ENCODE measurements at regions of chr14 and their contacts with region 1.

Region 1: GRCh38 chr14:106831322-106831720 is 1304.9 kb downstream of the TMEM121 start:
- DNase-seq: peak; percentile 76 to 83 (median 82)
- H3K4me3 ChIP-seq: no peak overlapping the region
- H3K27ac ChIP-seq: no peak overlapping the region
- H3K4me1 ChIP-seq: peaks cover 0 to 3% (median under 1%) of the 10 kb centered on the region in 4 experiments
- H3K27me3 ChIP-seq: no peaks in the 10 kb centered on the region

Region 2: DNA sequence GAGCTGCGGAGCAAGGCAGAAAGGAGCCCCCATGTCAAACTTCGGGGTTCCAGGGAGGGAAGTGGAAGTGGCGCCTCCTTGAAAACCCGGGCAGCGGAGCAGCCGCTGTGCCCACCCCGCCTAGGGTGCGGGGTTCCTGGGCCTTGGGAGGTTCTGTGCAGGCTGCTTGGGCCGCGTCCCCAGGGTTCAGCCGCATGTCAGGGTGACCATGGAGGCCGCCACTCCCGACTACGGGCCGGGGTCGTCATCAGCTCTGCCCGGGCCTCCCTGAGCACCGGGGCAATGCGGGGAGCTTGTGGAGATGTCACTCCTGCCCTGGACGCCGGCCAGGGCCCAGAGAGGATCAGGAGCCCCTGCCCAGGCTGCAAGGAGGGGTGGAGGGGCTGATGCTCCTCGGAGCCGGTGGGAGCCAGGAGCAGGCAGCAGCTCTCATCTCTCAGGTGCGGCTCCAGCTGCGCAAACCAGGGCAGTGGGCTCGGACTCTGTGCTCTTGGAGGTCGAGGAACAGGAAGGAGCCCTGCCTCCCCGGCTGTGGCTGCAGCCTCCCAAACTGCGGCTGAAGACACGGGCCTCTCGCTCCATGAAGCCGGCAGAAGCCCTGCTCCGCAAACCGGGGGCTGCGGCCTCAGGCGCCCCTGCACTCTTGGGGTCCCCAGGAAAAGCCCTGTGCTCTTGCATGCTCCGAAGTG is 18.4 kb before region 1 on chr14:
- CTCF ChIA-PET with region 1: interaction called, 13 read pairs
- POLR2A ChIA-PET with region 1: no interaction called
- DNase-seq: no peak
- H3K4me3 ChIP-seq: no peak overlapping the region
- H3K27ac ChIP-seq: no peak overlapping the region
- H3K4me1 ChIP-seq: peaks cover 0 to 9% (median 8%) of the 10 kb centered on the region in 4 experiments
- H3K27me3 ChIP-seq: no peaks in the 10 kb centered on the region

Measured in common myeloid progenitor, CD34-positive (primary cell).